Body of pancreas (tissue), 4 donors: ENCODE measurements at regions of chr2 and their contacts with region 1.

Region 1: GRCh38 chr2:200703127-200703925 is 108.4 kb upstream of the BZW1 start:
- DNase-seq: peak; percentile 38 to 75 (median 42)
- ATAC-seq: peak; percentile 77
- H3K4me3 ChIP-seq: no peak overlapping the region
- H3K27ac ChIP-seq: no peak overlapping the region
- H3K4me1 ChIP-seq: no peaks in the 10 kb centered on the region
- H3K27me3 ChIP-seq: no peaks in the 10 kb centered on the region
- CTCF ChIP-seq: peak; percentile 33 to 87 (median 72)
- POLR2A ChIP-seq: no peak

Region 2: DNA sequence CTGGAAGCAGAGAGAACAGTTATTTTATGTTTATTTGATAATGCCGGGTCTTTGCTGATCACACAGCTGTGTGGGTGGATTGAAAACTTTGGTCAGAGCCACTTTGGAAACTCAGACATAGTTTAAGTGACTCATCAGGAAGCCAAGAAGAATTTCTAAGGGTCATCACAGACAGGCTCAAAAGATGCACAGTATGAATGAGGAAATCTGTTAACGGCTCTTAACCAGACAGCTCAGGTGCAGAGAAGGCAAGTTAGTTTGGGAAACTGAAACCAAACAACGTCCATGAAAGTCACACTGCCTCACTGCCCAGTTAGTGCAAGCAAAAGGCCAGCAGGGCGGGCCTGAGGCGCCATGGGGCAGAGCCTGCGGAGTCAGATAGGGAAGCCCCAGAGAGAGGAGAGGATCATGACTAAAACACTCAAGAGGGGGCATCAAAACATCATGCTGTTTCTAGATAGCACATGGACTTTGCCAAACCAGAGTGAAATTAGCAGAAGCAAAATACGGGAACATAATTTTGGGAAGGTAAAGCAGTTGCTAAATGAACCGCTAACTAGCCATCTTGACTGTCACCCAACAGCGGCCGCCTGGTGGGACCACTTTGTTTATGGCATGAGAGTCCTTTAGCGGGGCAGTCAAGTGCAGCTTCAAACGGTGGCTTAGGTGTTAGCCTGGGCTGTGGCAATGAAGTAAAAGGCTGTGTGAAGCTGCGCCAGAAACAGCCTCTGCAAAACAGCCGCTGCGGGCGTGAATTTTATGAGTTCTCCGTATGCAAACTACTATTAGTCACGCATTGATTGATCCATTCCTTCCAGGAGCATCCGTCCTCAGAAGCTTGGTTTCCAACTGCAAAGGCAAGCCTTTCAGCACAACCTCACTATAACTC is 294.7 kb before region 1 on chr2:
- intact Hi-C with region 1: no loop called
- DNase-seq: no peak
- ATAC-seq: no peak
- H3K4me3 ChIP-seq: no peak overlapping the region
- H3K27ac ChIP-seq: peak overlapping the region in 1 of 4 donors; percentile 20
- H3K4me1 ChIP-seq: peaks cover 36% of the 10 kb centered on the region
- H3K27me3 ChIP-seq: no peaks in the 10 kb centered on the region
- CTCF ChIP-seq: no peak
- POLR2A ChIP-seq: no peak

Region 3: DNA sequence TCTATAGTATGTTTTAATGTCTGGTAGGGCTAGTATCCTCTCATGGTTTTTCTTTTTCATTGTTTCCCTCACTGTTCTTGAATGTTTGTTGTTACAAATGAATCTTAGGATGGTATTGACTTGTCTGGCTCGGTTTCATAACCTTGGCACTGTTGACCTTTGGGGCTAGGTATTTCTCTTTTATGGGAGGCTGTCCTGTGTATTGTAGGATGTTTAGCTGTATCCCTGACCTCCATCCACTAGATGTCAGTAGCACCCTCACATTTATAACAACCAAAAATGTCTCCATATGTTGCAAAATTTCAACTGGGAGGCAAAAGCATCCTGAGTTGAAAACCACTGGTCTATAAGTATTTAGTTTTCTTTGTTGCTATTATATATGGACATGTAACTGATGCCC is 124.5 kb before region 1 on chr2:
- intact Hi-C with region 1: loop called (anchors 5 kb)
- DNase-seq: peak in 3 of 4 donors; percentile 20 to 58 (median 38)
- ATAC-seq: peak; percentile 81
- H3K4me3 ChIP-seq: no peak overlapping the region
- H3K27ac ChIP-seq: no peak overlapping the region
- H3K4me1 ChIP-seq: no peaks in the 10 kb centered on the region
- H3K27me3 ChIP-seq: no peaks in the 10 kb centered on the region
- CTCF ChIP-seq: peak; percentile 34 to 82 (median 77)
- POLR2A ChIP-seq: no peak